Activated CD4-positive, alpha-beta memory T cell treated with anti-CD3 and anti-CD28 coated beads, Interleukin-2, amount 10 ng/mL, durations not matched to agents 7 days and 5 days (primary cell): ENCODE measurements at regions of chr10 and their contacts with region 1.

Region 1: GRCh38 chr10:98425511-98426352 is 10.8 kb upstream of the PYROXD2 start:
- DNase-seq: peak; percentile 51
- H3K4me3 Mint-ChIP-seq: no peak overlapping the region
- H3K27ac Mint-ChIP-seq: no peak overlapping the region
- H3K4me1 Mint-ChIP-seq: no peaks in the 10 kb centered on the region
- H3K27me3 Mint-ChIP-seq: no peaks in the 10 kb centered on the region

Region 2: GRCh38 chr10:98331885-98332284 is 93.8 kb before region 1 on chr10:
- CTCF ChIA-PET with region 1: no interaction called
- POLR2A ChIA-PET with region 1: no interaction called
- DNase-seq: peak; percentile 38
- H3K4me3 Mint-ChIP-seq: no peak overlapping the region
- H3K27ac Mint-ChIP-seq: no peak overlapping the region
- H3K4me1 Mint-ChIP-seq: no peaks in the 10 kb centered on the region
- H3K27me3 Mint-ChIP-seq: peaks cover 26% of the 10 kb centered on the region

Region 3: GRCh38 chr10:98414932-98415730 is 10.6 kb before region 1 on chr10 and contains the start of gene PYROXD2:
- CTCF ChIA-PET with region 1: interaction called, 13 read pairs
- POLR2A ChIA-PET with region 1: interaction called, 4 read pairs
- DNase-seq: peak; percentile 67
- H3K4me3 Mint-ChIP-seq: peak within 1 kb of the TSS; percentile 89
- H3K27ac Mint-ChIP-seq: peak within 1 kb of the TSS; percentile 92
- H3K4me1 Mint-ChIP-seq: peaks cover 16% of the 10 kb centered on the region
- H3K27me3 Mint-ChIP-seq: no peaks in the 10 kb centered on the region
- total RNA-seq, gene PYROXD2: 13.5 to 18.7 TPM

Region 4: GRCh38 chr10:98436704-98437103 is 11.0 kb after region 1 on chr10:
- CTCF ChIA-PET with region 1: interaction called, 19 read pairs
- POLR2A ChIA-PET with region 1: interaction called, 6 read pairs
- DNase-seq: no peak
- H3K4me3 Mint-ChIP-seq: no peak overlapping the region
- H3K27ac Mint-ChIP-seq: no peak overlapping the region
- H3K4me1 Mint-ChIP-seq: peaks cover 11% of the 10 kb centered on the region
- H3K27me3 Mint-ChIP-seq: no peaks in the 10 kb centered on the region

Region 5: DNA sequence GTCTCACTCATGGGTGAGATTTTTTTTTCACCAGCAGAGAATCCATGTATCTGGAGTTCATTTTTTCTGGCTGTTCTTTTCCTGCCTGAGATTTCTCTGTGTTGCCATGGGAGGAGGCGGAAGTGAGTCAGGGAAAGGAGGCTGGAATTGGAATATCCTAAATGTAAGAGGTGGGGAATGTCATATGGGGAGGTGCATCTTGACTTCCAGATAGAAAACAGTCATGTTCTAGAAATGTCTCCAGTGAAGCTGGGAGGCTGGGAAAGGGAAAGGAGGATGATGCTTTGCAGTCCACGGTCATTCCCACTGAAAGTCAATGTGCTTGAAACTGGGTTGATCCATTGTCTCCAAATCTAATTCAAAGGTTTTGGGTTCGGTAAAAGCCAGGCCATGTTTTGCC is 60.7 kb after region 1 on chr10:
- CTCF ChIA-PET with region 1: no interaction called
- POLR2A ChIA-PET with region 1: no interaction called
- DNase-seq: no peak
- H3K4me3 Mint-ChIP-seq: no peak overlapping the region
- H3K27ac Mint-ChIP-seq: no peak overlapping the region
- H3K4me1 Mint-ChIP-seq: peaks cover 4% of the 10 kb centered on the region
- H3K27me3 Mint-ChIP-seq: peaks cover 10% of the 10 kb centered on the region